GM18951 (cell line): ENCODE measurements at regions of chr9 and their contacts with region 1.

Region 1: GRCh38 chr9:70639853-70640814 is 225.7 kb upstream of the KLF9 start:
- POLR2A ChIP-seq: no peak

Region 2: DNA sequence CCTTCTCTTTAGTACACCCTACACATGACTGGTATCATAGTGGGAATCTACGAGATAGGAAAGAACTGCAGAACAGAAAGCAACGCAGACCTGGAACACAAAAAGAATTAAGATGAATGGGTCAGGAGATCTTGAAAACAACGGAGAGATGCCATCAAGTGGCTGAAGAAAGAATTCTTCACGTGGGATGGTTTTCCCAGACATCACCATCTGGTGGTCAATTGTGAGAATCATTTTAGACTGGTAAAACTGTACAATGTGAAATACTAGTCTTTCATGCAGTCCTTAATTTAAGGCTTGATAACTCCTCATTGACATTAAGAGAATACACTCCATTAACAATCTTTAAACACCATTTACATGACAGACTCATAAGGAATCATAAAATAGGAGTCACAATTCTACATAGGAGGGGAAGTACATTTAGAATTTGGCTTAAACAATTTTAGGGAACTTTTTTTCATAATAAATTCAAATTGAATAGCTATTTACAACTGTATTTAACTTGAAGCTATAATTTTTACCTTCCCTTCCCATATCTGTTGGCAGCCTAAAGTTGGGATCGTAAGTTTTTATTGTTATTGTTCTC is 609.7 kb after region 1 on chr9:
- in situ Hi-C with region 1: loop called (anchors 25 kb)
- POLR2A ChIP-seq: no peak